PC-9 (cell line): ENCODE measurements at regions of chr1 and their contacts with region 1.

Region 1: GRCh38 chr1:166859597-166859996 is 16.5 kb downstream of the TADA1 start:
- DNase-seq: no peak
- H3K4me3 ChIP-seq: no peak overlapping the region
- H3K27ac ChIP-seq: no peak overlapping the region
- H3K4me1 ChIP-seq: no peaks in the 10 kb centered on the region
- H3K27me3 ChIP-seq: no peaks in the 10 kb centered on the region
- CTCF ChIP-seq: no peak

Region 2: DNA sequence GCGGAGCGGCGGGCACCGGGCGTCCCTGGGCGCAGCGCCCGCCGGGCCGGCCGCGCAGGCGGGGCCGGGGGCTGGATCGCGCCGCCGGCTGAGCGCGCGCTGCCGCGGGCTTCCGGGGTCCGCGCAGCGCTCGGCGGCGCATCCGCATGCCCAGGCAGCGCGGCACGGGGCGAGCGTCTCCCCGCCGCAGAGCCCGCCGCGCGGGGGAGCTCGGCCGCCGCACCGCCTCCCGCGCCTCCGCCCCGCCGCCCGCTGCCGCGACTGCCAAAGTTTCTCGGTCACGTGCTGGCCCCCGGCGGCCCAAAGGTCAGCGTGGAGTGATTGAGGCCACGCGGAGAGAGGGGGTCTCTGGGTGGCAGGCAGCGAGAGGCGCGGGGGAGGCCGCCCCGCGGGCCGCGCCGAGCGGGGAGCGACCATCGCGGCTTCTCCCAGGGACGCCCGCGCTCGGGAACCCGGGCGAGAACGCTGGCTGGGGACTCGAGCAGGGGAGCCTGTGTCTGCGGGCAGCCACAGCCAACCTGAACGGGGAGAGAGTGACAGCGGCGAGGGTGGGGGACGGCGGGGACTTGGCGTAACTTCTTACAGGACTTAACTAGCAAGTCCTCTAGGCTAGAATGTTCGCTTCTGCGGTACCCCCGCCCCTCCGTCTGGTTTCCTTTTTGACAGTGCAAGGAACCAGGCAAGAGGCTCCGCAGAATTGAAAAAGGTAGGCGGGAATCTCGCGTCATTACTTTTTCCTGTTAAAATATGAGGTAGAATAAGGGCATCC is 115.9 kb after region 1 on chr1 and contains the start of gene ILDR2:
- CTCF ChIA-PET with region 1: no interaction called
- POLR2A ChIA-PET with region 1: no interaction called
- intact Hi-C with region 1: no loop called
- DNase-seq: peak in 1 of 2 experiments; percentile 4
- H3K4me3 ChIP-seq: peak within 1 kb of the TSS; percentile 75
- H3K27ac ChIP-seq: no peak within 1 kb of the TSS
- H3K4me1 ChIP-seq: 0 out of 2 replicates have a peak, but pooled peaks cover 6% of the 10 kb centered on the region
- H3K27me3 ChIP-seq: peaks cover 77% of the 10 kb centered on the region
- CTCF ChIP-seq: no peak
- total RNA-seq, gene ILDR2: not detected in 2 replicates

Region 3: GRCh38 chr1:167121375-167122120 is 262.0 kb after region 1 on chr1:
- CTCF ChIA-PET with region 1: no interaction called
- POLR2A ChIA-PET with region 1: no interaction called
- intact Hi-C with region 1: loop called (anchors 10 kb)
- DNase-seq: peak; percentile 76 to 88
- H3K4me3 ChIP-seq: peak overlapping the region; percentile 91
- H3K27ac ChIP-seq: peak overlapping the region; percentile 59
- H3K4me1 ChIP-seq: peaks cover 18% of the 10 kb centered on the region; the same call in 1 of the 2 replicates
- H3K27me3 ChIP-seq: no peaks in the 10 kb centered on the region
- CTCF ChIP-seq: no peak

Region 4: GRCh38 chr1:168567007-168567406 is 1707.4 kb after region 1 on chr1:
- CTCF ChIA-PET with region 1: no interaction called
- POLR2A ChIA-PET with region 1: no interaction called
- intact Hi-C with region 1: no loop called
- DNase-seq: no peak
- H3K4me3 ChIP-seq: no peak overlapping the region
- H3K27ac ChIP-seq: no peak overlapping the region
- H3K4me1 ChIP-seq: no peaks in the 10 kb centered on the region
- H3K27me3 ChIP-seq: no peaks in the 10 kb centered on the region
- CTCF ChIP-seq: no peak